ENCODE measurements at regions of chr13 and their contacts with region 1.

Region 1: DNA sequence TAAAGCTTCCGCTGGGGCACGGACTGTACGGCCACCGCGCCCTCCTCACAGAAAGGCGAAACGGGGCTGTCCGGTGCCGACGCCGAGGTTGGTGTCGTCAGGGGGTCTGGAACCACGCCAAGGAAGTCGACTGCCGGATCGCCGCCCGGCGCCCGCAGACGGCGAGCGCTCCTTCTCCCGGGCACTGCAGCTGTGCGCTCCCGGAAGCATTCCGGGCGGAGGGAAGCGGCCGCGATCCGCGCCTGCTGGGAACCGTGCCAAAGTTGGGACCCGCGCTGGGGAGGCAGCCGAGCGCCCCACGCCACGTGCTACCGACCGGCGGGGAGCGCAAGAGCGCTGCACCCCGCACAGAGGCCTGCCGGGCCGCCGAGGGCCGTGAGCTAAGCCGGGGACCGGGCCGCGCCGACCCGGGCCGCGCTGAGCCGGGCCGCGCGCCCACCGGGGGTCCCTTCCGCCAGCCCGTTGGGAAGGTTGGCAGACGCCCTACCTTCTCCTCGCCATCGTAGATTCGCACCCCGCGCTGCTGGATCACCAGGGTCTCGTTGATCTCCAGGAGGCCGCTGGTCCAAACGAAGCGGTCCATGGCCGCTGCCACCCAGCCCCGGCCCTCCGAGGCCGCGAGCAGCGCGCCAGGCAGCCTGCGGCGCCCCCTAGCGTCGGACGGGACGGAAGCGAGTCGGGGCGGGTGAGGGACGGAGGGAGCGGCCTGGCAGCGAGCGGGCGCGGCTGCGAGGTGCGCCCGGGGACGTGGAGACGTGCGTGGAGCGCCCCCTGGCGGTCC is at the start of gene VPS36:
- DNase-seq: peak; percentile 94
- H3K4me3 Mint-ChIP-seq: peak within 1 kb of the TSS; percentile 94
- H3K27ac Mint-ChIP-seq: peak within 1 kb of the TSS; percentile 94
- H3K4me1 Mint-ChIP-seq: peaks cover 18% of the 10 kb centered on the region
- H3K27me3 Mint-ChIP-seq: no peaks in the 10 kb centered on the region
- CTCF ChIP-seq: peak; percentile 99
- total RNA-seq, gene VPS36: 42.8 and 43.4 TPM in 2 replicates

Region 2: DNA sequence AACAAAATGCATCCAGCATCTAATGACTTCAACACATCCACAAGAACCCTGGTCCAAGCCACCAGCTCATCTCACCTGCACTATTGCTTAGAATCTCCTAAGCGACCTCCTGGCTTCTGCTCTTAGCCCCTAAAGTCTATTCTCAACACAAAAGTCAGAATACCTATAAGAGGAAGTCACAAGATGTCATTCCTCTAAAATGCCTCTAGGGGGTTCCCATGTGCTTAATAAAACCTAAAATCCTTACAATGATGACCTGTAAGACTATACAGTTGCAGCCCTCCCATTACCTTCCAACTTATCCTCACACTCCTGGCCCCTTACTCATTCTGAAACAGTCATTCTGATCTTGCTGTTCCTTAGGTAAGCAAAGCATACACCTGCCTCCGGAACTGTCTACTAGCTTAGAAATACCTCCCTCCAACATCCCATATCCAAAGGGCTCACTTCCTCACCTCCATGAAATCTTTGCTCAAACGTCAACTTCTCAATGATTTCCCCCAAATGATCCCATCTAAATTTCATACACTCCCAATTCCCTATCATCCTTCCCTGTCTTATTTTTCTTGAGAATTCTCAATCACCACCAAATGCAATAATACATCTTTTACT is 449.0 kb before region 1 on chr13:
- CTCF ChIA-PET with region 1: interaction called, 5 read pairs
- POLR2A ChIA-PET with region 1: interaction called, 4 read pairs
- intact Hi-C with region 1: loop called (anchors 5 kb)
- DNase-seq: peak; percentile 51
- H3K4me3 Mint-ChIP-seq: no peak overlapping the region
- H3K27ac Mint-ChIP-seq: no peak overlapping the region
- H3K4me1 Mint-ChIP-seq: peaks cover 27% of the 10 kb centered on the region
- H3K27me3 Mint-ChIP-seq: peaks cover 12% of the 10 kb centered on the region
- CTCF ChIP-seq: peak; percentile 60

Region 3: DNA sequence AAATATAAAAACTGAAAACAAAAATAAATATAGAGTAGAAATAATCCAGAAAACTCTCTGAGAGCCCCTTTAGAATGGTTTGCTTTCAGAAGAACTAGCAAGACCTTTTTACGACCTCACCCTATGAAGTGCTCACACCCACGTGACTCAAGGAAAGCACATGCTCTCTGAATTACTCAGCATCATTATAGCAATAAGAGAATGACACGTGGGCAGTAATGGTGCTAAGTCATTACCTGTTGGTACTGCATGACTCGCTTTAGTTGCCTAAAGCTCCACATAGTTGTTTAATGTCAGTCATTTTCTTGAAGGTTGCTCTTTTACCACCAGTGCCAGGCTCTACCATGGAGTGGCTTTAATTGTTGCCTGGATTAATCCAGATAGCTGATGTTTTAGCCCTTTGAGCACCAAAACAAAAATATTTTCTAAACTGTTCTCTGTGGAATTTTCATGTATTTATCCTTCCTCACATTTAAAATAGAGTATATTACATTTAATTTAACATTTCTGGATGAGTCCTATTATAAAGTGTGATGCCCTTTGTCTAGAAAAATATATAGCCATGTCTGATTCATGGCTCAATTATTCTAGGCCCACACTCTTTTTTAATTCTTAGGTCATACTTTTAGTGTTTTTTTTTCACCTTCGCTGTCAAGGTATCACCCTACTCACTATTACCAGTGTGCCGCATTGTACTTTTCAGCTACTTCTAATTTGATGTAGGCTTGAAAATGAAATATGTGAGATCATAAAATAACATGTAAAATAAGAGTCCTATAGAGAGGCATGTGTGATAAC is 101.0 kb before region 1 on chr13:
- CTCF ChIA-PET with region 1: interaction called, 291 read pairs
- POLR2A ChIA-PET with region 1: interaction called, 82 read pairs
- intact Hi-C with region 1: no loop called
- DNase-seq: peak; percentile 83
- H3K4me3 Mint-ChIP-seq: no peak overlapping the region
- H3K27ac Mint-ChIP-seq: peak overlapping the region; percentile 66
- H3K4me1 Mint-ChIP-seq: peaks cover 46% of the 10 kb centered on the region
- H3K27me3 Mint-ChIP-seq: no peaks in the 10 kb centered on the region
- CTCF ChIP-seq: no peak

Region 4: GRCh38 chr13:52405767-52406494 is 44.3 kb before region 1 on chr13 and contains the start of gene THSD1:
- CTCF ChIA-PET with region 1: interaction called, 31 read pairs
- POLR2A ChIA-PET with region 1: interaction called, 52 read pairs
- intact Hi-C with region 1: loop called (anchors 2 kb)
- DNase-seq: peak; percentile 44
- H3K4me3 Mint-ChIP-seq: peak within 1 kb of the TSS; percentile 86
- H3K27ac Mint-ChIP-seq: peak within 1 kb of the TSS; percentile 82
- H3K4me1 Mint-ChIP-seq: peaks cover 10% of the 10 kb centered on the region
- H3K27me3 Mint-ChIP-seq: no peaks in the 10 kb centered on the region
- CTCF ChIP-seq: no peak
- total RNA-seq, gene THSD1: 13.3 and 16.7 TPM in 2 replicates

Region 5: DNA sequence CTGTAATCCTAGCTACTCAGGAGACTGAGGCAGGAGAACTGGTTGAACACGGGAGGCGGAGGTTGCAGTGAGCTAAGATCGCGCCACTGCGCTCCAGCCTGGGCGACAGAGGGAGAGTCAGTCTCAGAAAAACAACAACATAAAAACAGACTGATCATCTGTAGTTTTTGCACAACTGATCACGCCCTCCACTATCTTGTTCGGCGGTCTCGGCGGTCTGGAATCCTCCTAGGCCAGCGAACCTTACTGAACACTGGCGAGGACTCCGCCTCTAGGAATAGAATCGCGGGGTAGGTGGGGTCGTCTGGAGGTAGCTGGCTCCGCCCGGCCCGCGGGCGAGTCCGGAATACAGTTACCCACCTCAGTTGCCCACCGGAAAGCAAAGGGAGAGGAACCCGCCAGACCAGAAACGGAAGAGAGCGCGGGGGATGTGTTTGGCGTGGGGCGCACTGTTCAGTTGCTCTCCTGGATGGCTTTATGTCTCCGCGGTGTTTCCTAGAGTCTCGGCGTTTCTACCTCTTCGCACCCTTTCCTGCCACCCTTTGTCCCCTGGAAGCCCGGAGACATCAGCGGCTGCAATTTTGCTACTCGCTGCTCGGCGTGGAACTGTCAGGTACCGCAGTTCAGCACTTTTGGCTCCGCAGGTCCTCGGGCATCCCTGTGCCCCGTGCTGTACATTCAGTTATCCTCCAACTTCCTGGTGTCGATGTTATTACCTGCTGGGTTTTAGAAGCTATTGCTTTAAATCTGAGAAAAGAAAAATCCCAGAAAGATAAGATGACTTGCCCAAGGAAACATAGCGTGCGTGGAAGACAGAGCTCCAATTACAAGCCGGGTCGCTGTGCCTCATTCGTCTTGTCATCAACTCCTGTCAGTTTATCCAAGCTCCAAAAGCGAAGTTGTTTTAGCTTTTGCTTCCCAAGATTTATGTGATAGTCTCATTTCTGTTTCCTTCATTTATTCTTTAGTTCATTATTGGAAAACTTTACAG is 167.2 kb after region 1 on chr13:
- CTCF ChIA-PET with region 1: no interaction called
- POLR2A ChIA-PET with region 1: interaction called, 7 read pairs
- intact Hi-C with region 1: loop called (anchors 10 kb)
- DNase-seq: peak; percentile 85
- H3K4me3 Mint-ChIP-seq: peak overlapping the region; percentile 98
- H3K27ac Mint-ChIP-seq: peak overlapping the region; percentile 88
- H3K4me1 Mint-ChIP-seq: peaks cover 11% of the 10 kb centered on the region
- H3K27me3 Mint-ChIP-seq: no peaks in the 10 kb centered on the region
- CTCF ChIP-seq: no peak

Region 6: GRCh38 chr13:52686381-52686780 is 236.2 kb after region 1 on chr13:
- CTCF ChIA-PET with region 1: no interaction called
- POLR2A ChIA-PET with region 1: no interaction called
- intact Hi-C with region 1: no loop called
- DNase-seq: no peak
- H3K4me3 Mint-ChIP-seq: no peak overlapping the region
- H3K27ac Mint-ChIP-seq: no peak overlapping the region
- H3K4me1 Mint-ChIP-seq: no peaks in the 10 kb centered on the region
- H3K27me3 Mint-ChIP-seq: no peaks in the 10 kb centered on the region
- CTCF ChIP-seq: no peak

Region 7: DNA sequence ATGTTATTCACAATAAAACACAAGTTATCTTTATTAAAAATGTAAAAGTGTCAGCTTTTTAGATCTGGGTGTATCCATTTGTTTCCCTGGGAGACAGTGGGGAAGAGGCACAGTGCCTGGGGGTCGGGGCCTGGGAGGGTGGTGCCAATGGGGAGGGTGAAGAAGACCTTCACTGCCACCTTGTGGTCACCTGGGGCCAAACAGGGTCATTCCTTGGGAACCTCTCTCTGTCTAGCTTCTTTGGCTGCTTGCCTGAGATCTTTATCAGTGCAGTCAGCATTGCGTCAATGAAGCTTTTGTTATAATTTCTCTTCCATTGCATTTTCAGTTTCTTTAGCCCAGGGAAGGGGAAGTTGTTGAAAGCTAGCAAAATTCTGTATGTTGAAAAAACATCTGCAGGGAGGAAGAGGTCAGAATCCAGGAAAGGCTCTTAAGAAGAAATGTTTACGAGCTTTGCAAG is 359.1 kb after region 1 on chr13:
- CTCF ChIA-PET with region 1: no interaction called
- POLR2A ChIA-PET with region 1: interaction called, 3 read pairs
- intact Hi-C with region 1: loop called (anchors 10 kb)
- DNase-seq: peak; percentile 92
- H3K4me3 Mint-ChIP-seq: no peak overlapping the region
- H3K27ac Mint-ChIP-seq: no peak overlapping the region
- H3K4me1 Mint-ChIP-seq: peaks cover 8% of the 10 kb centered on the region
- H3K27me3 Mint-ChIP-seq: peaks cover 23% of the 10 kb centered on the region
- CTCF ChIP-seq: peak; percentile 67

Measured in MCF 10A (cell line).